MCF 10A (cell line): ENCODE measurements at regions of chr1 and their contacts with region 1.

Region 1: GRCh38 chr1:101905283-101905835 is 91.4 kb downstream of the OLFM3 start:
- DNase-seq: peak; percentile 5
- H3K4me3 Mint-ChIP-seq: no peak overlapping the region
- H3K27ac Mint-ChIP-seq: no peak overlapping the region
- H3K4me1 Mint-ChIP-seq: no peaks in the 10 kb centered on the region
- H3K27me3 Mint-ChIP-seq: peaks cover 42% of the 10 kb centered on the region
- CTCF ChIP-seq: no peak

Region 2: DNA sequence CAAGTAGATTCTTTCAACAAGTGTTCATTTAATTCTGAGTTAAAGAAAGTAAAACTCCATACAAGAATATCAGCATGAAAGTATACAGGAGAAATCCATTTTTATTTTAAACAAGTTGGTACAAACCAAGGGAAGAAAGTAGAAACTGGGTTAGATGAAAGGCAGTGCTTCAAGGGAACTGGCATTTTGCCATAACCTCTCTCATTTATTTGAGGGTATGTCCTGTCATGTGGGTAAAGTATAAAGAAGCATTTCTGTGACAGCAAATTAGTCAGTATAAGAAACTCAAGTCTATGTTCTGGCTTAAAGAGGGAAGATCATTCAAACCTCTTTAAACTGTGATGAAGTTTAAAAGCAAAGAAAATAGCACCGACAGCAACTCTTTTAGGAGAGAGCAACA is 59.3 kb after region 1 on chr1:
- CTCF ChIA-PET with region 1: no interaction called
- POLR2A ChIA-PET with region 1: no interaction called
- intact Hi-C with region 1: no loop called
- DNase-seq: no peak
- H3K4me3 Mint-ChIP-seq: no peak overlapping the region
- H3K27ac Mint-ChIP-seq: no peak overlapping the region
- H3K4me1 Mint-ChIP-seq: no peaks in the 10 kb centered on the region
- H3K27me3 Mint-ChIP-seq: peaks cover 83% of the 10 kb centered on the region
- CTCF ChIP-seq: no peak

Region 3: GRCh38 chr1:101980974-101981373 is 75.6 kb after region 1 on chr1:
- CTCF ChIA-PET with region 1: no interaction called
- POLR2A ChIA-PET with region 1: no interaction called
- intact Hi-C with region 1: loop called (anchors 10 kb)
- DNase-seq: no peak
- H3K4me3 Mint-ChIP-seq: no peak overlapping the region
- H3K27ac Mint-ChIP-seq: no peak overlapping the region
- H3K4me1 Mint-ChIP-seq: no peaks in the 10 kb centered on the region
- H3K27me3 Mint-ChIP-seq: peaks cover 43% of the 10 kb centered on the region
- CTCF ChIP-seq: no peak